A673 (cell line): ENCODE measurements at regions of chr16 and their contacts with region 1.

Region 1: DNA sequence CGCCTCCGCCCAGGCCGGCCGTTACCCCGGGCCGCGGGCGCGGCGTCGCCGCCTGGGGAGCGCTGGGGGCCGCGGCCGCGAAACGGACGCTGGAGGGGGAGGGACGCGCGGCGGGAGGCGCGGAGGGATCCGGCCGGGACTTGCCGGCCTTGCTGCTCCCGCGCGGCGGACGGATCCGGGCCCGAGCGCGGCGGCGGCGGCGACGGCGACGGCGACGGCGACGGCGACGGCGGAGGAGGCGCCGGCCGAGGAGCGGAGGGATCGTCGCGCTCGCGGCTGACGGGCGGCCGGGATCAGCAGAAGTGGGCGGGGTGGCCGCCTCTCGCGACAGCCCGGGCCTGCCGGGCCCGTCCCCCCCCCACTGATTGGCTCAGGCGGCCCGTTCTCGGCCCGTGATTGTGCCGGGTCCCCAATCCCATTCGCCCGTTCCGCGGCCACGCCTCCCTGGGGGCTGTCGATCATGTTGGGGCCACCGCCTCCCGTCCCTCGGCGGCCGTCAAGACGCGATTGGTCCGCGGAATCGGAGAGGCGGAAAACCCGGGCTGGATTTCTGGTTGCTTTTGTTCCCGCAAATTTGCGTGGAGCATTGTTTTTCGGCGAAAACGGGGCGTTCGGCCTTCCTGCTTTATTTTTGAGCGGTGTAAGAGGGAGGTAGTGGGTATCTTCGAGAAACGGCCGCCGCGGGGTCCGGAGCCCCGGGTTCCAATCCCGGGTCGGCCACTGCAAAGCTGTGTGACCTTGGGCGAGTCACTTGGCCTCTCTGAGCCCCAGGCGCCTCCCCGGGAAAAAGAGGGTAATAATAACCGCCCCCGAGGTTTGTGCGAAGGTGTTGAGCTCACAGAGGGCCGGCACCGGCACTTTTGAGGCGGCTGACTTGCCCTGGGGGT is at the start of gene ZCCHC14:
- DNase-seq: peak; percentile 99
- H3K4me3 ChIP-seq: peak within 1 kb of the TSS; percentile 54
- H3K27ac ChIP-seq: peak within 1 kb of the TSS; percentile 65
- H3K4me1 ChIP-seq: peaks cover 14% of the 10 kb centered on the region
- H3K27me3 ChIP-seq: no peaks in the 10 kb centered on the region
- CTCF ChIP-seq: no peak
- total RNA-seq, gene ZCCHC14: 30.3 and 32.3 TPM in 2 replicates

Region 2: GRCh38 chr16:87435372-87436224 is 57.4 kb before region 1 on chr16:
- CTCF ChIA-PET with region 1: no interaction called
- POLR2A ChIA-PET with region 1: no interaction called
- intact Hi-C with region 1: loop called (anchors 5 kb)
- DNase-seq: peak; percentile 46
- H3K4me3 ChIP-seq: no peak overlapping the region
- H3K27ac ChIP-seq: peak overlapping the region; percentile 38
- H3K4me1 ChIP-seq: peaks cover 13% of the 10 kb centered on the region
- H3K27me3 ChIP-seq: no peaks in the 10 kb centered on the region
- CTCF ChIP-seq: no peak